HEK293 (cell line): ENCODE measurements at regions of chr5 and their contacts with region 1.

Region 1: DNA sequence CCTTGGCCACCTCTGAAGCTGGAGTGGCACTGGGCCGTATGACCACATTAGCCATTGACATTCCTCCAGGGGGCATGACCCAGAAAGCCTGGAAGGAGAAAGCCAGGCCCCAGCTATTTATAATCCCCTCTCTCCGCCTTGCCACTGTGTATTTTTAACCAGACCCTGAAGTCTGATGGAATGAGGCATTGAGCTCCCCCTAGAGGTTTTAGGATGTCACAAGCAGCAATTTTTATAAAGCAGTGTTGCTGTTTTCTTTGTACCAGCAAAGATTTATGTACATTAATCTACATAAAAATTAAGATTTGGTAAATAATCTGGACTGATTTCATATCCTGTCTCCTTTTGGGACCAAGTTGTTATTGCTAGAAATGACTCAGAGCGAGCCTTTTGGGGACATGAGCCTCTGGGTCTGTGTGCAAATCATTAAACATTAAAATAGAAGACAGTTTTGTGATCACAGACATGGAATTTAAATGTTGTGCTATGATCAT is 127.1 kb downstream of the TRIO start:
- H3K4me3 ChIP-seq: no peak overlapping the region
- H3K27ac ChIP-seq: no peak overlapping the region
- H3K4me1 ChIP-seq: peaks cover 48% of the 10 kb centered on the region
- CTCF ChIP-seq: no peak

Region 2: GRCh38 chr5:13553896-13554295 is 716.4 kb before region 1 on chr5:
- CTCF ChIA-PET with region 1: no interaction called
- POLR2A ChIA-PET with region 1: no interaction called
- H3K4me3 ChIP-seq: no peak overlapping the region
- H3K27ac ChIP-seq: no peak overlapping the region
- H3K4me1 ChIP-seq: no peaks in the 10 kb centered on the region
- CTCF ChIP-seq: no peak

Region 3: GRCh38 chr5:13976867-13977830 is 293.1 kb before region 1 on chr5:
- CTCF ChIA-PET with region 1: interaction called, 16 read pairs
- POLR2A ChIA-PET with region 1: no interaction called
- H3K4me3 ChIP-seq: no peak overlapping the region
- H3K27ac ChIP-seq: no peak overlapping the region
- H3K4me1 ChIP-seq: no peaks in the 10 kb centered on the region
- CTCF ChIP-seq: peak; percentile 32; the same call in 1 of the 2 replicates

Region 4: GRCh38 chr5:14108170-14108996 is 161.9 kb before region 1 on chr5:
- CTCF ChIA-PET with region 1: interaction called, 25 read pairs
- POLR2A ChIA-PET with region 1: no interaction called
- H3K4me3 ChIP-seq: no peak overlapping the region
- H3K27ac ChIP-seq: no peak overlapping the region
- H3K4me1 ChIP-seq: peaks cover 10% of the 10 kb centered on the region
- CTCF ChIP-seq: no peak

Region 5: DNA sequence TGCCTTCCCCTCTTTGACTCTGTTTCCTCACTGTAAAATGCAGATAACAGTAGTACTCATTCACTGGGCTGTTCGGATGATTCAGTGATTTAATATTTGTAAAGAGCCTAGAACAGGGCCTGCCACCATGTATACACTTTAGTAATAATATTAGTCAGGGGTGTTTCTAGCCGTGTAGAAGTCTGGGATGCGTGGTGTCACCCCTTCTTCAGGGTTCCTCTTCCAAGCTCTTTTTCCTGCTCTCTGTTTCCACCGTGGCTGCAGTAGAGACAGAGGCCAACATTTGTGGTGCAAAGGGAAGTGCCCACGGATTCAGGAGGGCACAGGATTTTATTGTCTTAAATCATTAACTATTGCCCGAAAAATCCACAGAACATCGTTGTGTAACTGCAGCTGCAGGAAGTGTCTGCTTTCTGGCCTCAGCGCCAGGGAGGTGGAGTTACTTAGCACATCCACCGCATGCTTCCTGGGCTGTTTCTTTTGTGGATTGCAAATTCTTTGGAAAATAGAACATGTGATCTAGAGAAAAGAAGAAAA is 65.4 kb before region 1 on chr5:
- CTCF ChIA-PET with region 1: interaction called, 12 read pairs
- POLR2A ChIA-PET with region 1: no interaction called
- H3K4me3 ChIP-seq: no peak overlapping the region
- H3K27ac ChIP-seq: no peak overlapping the region
- H3K4me1 ChIP-seq: peaks cover 60% of the 10 kb centered on the region
- CTCF ChIP-seq: no peak

Region 6: DNA sequence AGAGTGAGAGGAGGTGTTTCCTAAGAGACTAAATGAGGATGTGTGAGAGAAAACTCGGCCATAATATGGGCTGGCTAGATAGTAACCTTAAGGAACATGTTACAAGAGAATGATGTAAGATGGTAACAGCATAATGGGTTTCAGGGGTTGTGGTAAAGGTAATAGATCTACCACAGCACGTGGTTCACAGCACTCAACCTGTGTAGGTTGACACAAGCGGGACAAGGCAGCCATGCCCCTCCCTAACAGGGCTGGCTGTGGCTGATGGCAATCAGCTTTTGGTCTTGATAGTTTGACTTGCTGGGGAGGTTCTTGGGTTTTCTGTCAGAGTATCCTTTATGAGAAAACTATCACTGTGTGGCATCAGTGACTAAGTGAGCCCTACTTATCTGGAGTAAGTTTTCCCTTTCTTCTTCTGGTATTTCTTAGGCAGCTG is 11.5 kb after region 1 on chr5:
- CTCF ChIA-PET with region 1: interaction called, 28 read pairs
- POLR2A ChIA-PET with region 1: no interaction called
- H3K4me3 ChIP-seq: no peak overlapping the region
- H3K27ac ChIP-seq: no peak overlapping the region
- H3K4me1 ChIP-seq: no peaks in the 10 kb centered on the region
- CTCF ChIP-seq: no peak